HEK293T (cell line): ENCODE measurements at regions of chr1 and their contacts with region 1.

Region 1: DNA sequence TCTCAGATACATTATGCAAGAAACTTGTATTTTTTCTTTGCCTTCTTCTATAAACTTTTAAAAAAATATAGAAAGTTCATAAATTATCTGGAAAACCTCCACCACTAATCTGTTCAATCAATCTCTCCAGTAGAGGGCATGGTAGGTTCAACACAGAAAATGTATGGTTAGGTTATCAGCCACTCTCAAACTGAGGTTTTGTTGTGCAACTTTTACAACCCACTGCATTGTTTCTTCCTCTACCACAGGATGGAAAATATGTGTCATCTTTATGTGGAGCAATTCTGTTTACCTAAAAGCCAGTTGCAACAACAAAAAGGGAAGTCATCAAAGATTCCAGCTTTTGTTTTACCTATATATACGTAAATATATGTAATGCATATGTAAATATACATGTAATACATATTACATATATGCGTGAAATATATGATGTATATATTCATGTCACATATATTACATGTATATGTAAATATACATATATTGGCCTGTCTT is 3.0 kb upstream of the RGS2 start:
- DNase-seq: peak; percentile 55

Region 2: DNA sequence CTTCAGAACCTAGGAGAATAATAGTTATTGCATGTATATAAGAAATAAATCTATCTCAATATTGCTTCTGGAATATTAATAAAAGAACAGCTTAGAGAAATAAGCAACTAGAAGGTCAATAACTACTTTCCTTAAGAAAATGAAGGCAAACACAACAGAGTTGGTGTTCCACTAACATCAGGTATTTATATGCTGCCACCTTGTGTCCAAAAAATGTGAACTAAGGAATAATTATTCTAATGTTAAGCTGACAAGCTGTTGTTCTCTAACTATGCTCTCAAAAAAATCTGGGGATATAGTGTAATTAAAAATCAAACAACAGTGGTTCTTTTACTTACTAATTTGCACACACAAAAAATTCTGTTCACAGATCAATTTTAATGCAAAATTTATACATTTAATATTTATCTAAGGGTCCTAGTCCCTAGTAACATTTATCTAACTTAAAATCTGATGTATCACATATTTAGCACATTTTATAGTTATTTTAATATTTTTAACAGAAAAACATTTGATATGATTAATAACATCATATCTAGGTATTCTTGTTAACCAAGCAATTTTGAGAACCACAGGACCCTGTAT is 213.7 kb after region 1 on chr1:
- CTCF ChIA-PET with region 1: interaction called, 10 read pairs
- POLR2A ChIA-PET with region 1: no interaction called
- DNase-seq: no peak